HepG2 (cell line): ENCODE measurements at regions of chr4 and their contacts with region 1.

Region 1: DNA sequence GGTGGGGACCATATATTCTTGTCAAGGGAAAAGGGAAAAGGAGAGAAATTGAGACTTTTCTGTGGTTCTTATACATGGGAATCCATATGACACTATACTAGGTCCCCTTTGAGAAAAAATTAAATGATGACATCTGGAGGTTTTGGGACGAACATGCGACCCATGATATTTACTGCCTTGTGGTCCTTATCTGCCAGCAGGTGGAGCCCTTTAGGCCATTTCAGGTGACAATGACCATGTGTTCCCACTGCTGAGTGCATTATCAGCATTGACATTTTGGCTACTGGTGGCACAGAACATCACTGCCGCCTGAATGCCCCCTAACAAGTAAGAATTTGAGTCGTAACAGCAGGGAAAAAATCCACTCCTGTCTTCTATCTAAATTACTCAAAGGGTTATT is 843.4 kb downstream of the FSTL5 start:
- DNase-seq: peak; percentile 48
- ATAC-seq: peak; percentile 91
- H3K4me3 ChIP-seq: no peak overlapping the region
- H3K27ac ChIP-seq: no peak overlapping the region
- H3K4me1 ChIP-seq: no peaks in the 10 kb centered on the region
- H3K27me3 ChIP-seq: no peaks in the 10 kb centered on the region
- CTCF ChIP-seq: peak; percentile 57
- EP300 ChIP-seq: no peak
- POLR2A ChIP-seq: no peak
- RAD21 ChIP-seq: no peak

Region 2: DNA sequence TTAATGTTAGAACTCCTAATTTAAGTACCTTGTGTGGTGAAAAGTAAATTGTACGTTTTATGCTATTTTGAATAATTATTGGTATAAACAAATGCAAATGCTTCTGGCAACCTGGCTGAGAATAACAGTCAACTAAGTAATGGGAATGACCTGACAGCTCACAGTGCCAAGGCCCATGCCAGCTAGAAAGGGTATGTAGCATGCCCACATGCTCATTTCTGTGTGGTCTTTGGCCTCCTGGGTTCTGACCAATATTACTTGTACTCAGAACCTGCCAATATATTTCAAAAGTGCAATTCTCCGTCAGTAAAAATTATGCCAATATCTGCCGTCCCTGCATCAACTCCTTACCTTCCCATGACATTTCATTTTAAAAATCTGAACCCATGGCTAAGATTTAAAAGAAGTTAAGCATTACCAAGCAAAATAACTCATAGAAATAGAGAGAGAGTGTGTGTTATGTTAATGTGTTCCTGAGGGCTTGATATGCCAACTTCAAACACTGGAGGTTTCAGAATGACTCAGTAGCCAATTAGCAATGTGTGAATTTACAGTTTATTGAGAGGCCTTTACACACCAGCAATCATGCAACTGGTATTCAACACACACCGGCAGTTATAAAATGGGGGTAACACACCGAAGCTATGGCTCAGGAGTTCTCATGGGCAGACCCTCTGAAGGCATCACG is 22.6 kb after region 1 on chr4:
- CTCF ChIA-PET with region 1: no interaction called
- POLR2A ChIA-PET with region 1: no interaction called
- in situ Hi-C with region 1: no loop called
- intact Hi-C with region 1: no loop called
- DNase-seq: no peak
- ATAC-seq: no peak
- H3K4me3 ChIP-seq: no peak overlapping the region
- H3K27ac ChIP-seq: no peak overlapping the region
- H3K4me1 ChIP-seq: no peaks in the 10 kb centered on the region
- H3K27me3 ChIP-seq: no peaks in the 10 kb centered on the region
- CTCF ChIP-seq: no peak
- EP300 ChIP-seq: no peak
- POLR2A ChIP-seq: no peak
- RAD21 ChIP-seq: no peak

Region 3: DNA sequence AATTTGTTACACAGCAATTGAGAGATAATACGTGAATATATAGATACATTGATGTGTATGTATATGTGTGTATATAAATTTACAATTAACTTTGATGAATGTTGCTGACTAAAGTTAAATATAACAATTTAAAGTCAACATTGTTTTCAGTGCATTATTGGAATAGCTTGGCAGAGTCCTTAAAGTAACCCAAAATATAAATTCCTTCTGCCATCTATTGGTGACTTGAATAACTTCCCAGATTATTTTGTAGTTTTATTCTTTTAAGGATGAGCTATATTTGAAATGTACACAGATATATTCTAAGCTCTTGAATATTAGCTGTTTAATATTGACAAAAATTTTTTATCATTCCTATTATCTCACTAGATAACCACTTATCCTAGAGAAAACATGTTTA is 1141.6 kb after region 1 on chr4:
- CTCF ChIA-PET with region 1: no interaction called
- POLR2A ChIA-PET with region 1: no interaction called
- in situ Hi-C with region 1: no loop called
- intact Hi-C with region 1: loop called (anchors 10 kb)
- DNase-seq: no peak
- ATAC-seq: no peak
- H3K4me3 ChIP-seq: no peak overlapping the region
- H3K27ac ChIP-seq: no peak overlapping the region
- H3K4me1 ChIP-seq: no peaks in the 10 kb centered on the region
- H3K27me3 ChIP-seq: no peaks in the 10 kb centered on the region
- CTCF ChIP-seq: no peak
- EP300 ChIP-seq: no peak
- POLR2A ChIP-seq: no peak
- RAD21 ChIP-seq: no peak